ENCODE measurements at regions of chr9 and their contacts with region 1.

Region 1: GRCh38 chr9:98087420-98088354 is 31.2 kb downstream of the NANS start:
- DNase-seq: peak; percentile 53
- CTCF ChIP-seq: no peak

Region 2: DNA sequence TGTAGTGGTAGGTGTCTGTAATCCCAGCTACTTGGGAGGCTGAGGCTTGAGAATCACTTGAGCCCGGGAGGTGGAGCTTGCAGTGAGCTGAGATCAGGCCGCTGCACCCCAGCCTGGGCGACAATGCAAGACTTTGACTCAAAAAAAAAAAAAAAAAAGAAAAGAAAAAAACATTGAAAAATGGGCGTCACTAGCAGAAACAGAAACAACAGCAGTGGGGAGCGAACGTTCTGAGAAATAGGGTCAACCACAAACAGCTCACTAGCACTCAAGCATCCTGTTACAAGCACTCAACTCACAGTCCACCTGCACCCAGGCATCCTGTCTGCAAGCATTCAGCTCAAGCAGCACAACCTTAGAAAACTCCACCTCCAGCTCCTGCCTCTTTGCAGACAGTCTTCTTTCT is 14.2 kb after region 1 on chr9:
- CTCF ChIA-PET with region 1: interaction called, 10 read pairs
- POLR2A ChIA-PET with region 1: no interaction called
- DNase-seq: peak; percentile 85
- CTCF ChIP-seq: no peak

Measured in GM10248 (cell line).